Activated naive CD8-positive, alpha-beta T cell treated with anti-CD3 and anti-CD28 coated beads, Interleukin-2, amount 10 ng/mL, durations not matched to agents 7 days and 5 days (primary cell): ENCODE measurements at regions of chr11 and their contacts with region 1.

Region 1: DNA sequence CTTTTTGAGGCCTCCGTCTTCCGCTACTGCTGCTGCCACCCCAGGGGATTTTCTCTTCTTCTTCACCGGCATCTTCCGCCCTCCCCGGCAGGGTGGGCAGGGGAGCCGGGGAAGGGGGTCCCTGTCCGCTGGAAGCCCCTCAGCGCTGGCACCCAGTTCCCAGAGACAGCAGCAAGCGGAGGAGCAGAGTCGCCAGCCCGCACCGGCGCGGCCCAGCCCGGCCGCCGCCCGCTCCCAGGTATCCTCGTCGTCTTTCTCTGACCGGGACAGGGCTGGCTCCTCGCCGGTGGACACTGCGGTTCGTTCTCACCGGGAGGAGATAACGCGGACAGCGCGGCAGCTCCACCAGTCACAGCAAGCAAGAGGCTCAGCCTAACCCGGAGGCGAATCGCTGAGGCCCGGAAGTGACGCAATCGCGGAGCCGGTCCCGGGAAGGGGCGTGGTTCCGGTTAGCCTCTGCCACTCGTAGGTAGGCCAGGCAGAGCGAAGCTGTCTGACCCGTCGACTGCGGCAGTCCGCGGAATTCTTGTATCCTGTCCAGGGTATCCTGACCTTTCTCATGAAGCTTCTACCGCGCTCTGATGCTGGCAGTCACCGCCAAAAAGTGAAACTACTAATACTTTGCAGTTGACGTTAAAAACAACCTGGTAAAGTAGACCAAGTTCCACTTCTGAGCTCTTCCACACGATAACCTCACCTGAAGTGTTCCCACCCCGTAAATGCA is at the start of gene DCUN1D5:
- DNase-seq: peak; percentile 93
- ATAC-seq: peak; percentile 92
- H3K4me3 Mint-ChIP-seq: peak within 1 kb of the TSS; percentile 99
- H3K27ac Mint-ChIP-seq: peak within 1 kb of the TSS; percentile 97
- H3K4me1 Mint-ChIP-seq: peaks cover 22% of the 10 kb centered on the region
- H3K27me3 Mint-ChIP-seq: peaks cover 17% of the 10 kb centered on the region
- total RNA-seq, gene DCUN1D5: 23.1 to 25.9 TPM

Region 2: GRCh38 chr11:103108933-103109817 is 17.2 kb after region 1 on chr11 and contains the start of gene DYNC2H1:
- POLR2A ChIA-PET with region 1: interaction called, 39 read pairs
- DNase-seq: peak; percentile 95
- ATAC-seq: peak; percentile 91
- H3K4me3 Mint-ChIP-seq: peak within 1 kb of the TSS; percentile 94
- H3K27ac Mint-ChIP-seq: peak within 1 kb of the TSS; percentile 87
- H3K4me1 Mint-ChIP-seq: peaks cover 12% of the 10 kb centered on the region
- H3K27me3 Mint-ChIP-seq: peaks cover 13% of the 10 kb centered on the region
- total RNA-seq, gene DYNC2H1: 2.9 to 3.5 TPM

Region 3: DNA sequence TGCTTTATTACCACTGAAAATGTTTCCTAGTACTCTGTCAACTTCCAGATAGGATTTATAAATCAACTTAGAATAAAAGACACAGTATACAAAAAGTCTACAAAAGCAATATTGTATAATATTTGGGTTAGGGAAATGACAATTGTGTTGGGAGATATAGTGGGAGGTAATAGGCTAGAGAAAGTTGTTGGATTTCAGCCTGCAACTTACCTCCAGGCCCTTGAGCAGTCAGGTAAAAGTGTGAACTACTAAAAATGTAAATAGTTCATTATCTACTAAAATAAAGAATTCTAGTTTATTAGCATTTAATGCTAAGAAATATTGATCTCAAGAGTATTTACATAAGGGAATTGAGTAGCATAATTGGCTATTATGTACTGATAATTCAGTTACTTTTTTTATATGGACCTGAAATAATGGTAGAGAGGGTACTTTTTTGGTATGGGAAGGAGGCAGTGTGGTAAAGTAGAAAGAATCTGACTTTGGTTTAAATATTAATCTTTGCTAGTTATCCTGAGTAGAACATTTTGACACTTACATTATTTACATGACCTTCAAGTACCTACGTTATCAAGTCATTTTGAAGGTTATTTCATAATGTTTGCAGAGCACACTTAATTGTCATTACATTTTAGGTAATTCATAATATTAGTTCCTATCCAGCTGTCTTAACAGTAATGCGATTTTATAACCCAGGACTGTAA is 72.3 kb after region 1 on chr11:
- POLR2A ChIA-PET with region 1: no interaction called
- DNase-seq: no peak
- ATAC-seq: no peak
- H3K4me3 Mint-ChIP-seq: no peak overlapping the region
- H3K27ac Mint-ChIP-seq: no peak overlapping the region
- H3K4me1 Mint-ChIP-seq: no peaks in the 10 kb centered on the region
- H3K27me3 Mint-ChIP-seq: no peaks in the 10 kb centered on the region